MCF 10A (cell line): ENCODE measurements at regions of chr11 and their contacts with region 1.

Region 1: DNA sequence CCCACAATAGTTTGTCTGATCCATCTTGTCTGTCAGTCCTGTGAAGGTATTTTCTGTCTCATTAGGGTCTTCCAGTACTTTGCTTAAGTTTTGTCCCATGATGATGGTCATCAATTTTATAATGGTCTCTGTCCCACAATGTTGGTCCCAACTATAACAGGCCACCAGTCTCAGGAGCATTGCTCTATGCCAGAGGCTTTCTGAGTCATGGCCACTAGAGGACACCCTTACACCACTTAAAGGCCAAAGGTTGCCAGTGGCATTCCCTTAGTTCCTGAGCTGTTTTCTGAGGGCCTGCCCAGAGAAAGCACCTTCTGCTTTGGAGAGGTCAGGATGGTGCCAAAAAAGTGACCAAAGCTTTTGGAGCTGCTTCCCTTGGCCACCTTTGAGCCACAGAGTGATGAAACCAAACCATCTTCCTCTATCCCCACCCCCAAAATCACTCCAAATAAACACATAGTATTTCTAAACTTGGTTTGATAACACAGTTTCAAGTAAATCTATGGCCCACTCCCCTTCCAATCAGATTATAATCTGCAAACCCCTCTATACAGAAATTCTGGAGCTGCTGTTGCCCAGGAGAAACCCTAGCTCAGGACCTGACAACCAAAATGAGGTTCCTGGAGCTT is 19.3 kb downstream of the EIF3F start:
- DNase-seq: peak; percentile 72
- H3K4me3 Mint-ChIP-seq: no peak overlapping the region
- H3K27ac Mint-ChIP-seq: no peak overlapping the region
- H3K4me1 Mint-ChIP-seq: no peaks in the 10 kb centered on the region
- H3K27me3 Mint-ChIP-seq: peaks cover 11% of the 10 kb centered on the region
- CTCF ChIP-seq: peak; percentile 94

Region 2: DNA sequence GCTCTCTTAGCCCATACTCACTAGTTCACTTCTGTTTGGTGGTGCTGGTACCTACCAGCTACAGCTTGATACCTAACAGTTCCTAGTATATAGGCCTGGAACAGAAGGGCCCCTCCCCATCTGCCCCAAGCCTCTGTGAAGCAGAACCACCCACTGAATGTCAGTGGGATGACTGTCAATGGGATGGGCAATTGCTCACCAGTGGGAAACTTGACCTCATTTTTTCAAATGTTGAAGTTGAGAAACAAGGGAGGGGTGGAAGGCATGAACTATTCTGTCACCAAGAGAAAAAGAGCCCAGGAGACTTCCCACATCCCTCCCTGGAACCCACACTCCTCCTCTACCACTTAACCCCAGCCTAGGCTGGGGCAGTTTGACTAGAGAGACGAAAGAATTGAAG is 41.1 kb before region 1 on chr11 and contains the start of gene NLRP10:
- CTCF ChIA-PET with region 1: no interaction called
- POLR2A ChIA-PET with region 1: no interaction called
- intact Hi-C with region 1: no loop called
- DNase-seq: no peak
- H3K4me3 Mint-ChIP-seq: no peak within 1 kb of the TSS
- H3K27ac Mint-ChIP-seq: peak within 1 kb of the TSS; percentile 50
- H3K4me1 Mint-ChIP-seq: peaks cover 27% of the 10 kb centered on the region
- H3K27me3 Mint-ChIP-seq: no peaks in the 10 kb centered on the region
- CTCF ChIP-seq: no peak
- total RNA-seq, gene NLRP10: 0.42 and 1.3 TPM in 2 replicates

Region 3: GRCh38 chr11:7994581-7995278 is 11.7 kb before region 1 on chr11:
- CTCF ChIA-PET with region 1: interaction called, 16 read pairs
- POLR2A ChIA-PET with region 1: no interaction called
- intact Hi-C with region 1: no loop called
- DNase-seq: no peak
- H3K4me3 Mint-ChIP-seq: no peak overlapping the region
- H3K27ac Mint-ChIP-seq: no peak overlapping the region
- H3K4me1 Mint-ChIP-seq: peaks cover 6% of the 10 kb centered on the region
- H3K27me3 Mint-ChIP-seq: no peaks in the 10 kb centered on the region
- CTCF ChIP-seq: no peak

Region 4: GRCh38 chr11:8025816-8026215 is 19.4 kb after region 1 on chr11:
- CTCF ChIA-PET with region 1: interaction called, 114 read pairs
- POLR2A ChIA-PET with region 1: no interaction called
- intact Hi-C with region 1: no loop called
- DNase-seq: peak; percentile 25
- H3K4me3 Mint-ChIP-seq: no peak overlapping the region
- H3K27ac Mint-ChIP-seq: no peak overlapping the region
- H3K4me1 Mint-ChIP-seq: no peaks in the 10 kb centered on the region
- H3K27me3 Mint-ChIP-seq: peaks cover 21% of the 10 kb centered on the region
- CTCF ChIP-seq: no peak

Region 5: GRCh38 chr11:8070417-8071115 is 64.1 kb after region 1 on chr11:
- CTCF ChIA-PET with region 1: interaction called, 25 read pairs
- POLR2A ChIA-PET with region 1: no interaction called
- intact Hi-C with region 1: loop called (anchors 1 kb)
- DNase-seq: peak; percentile 38
- H3K4me3 Mint-ChIP-seq: no peak overlapping the region
- H3K27ac Mint-ChIP-seq: no peak overlapping the region
- H3K4me1 Mint-ChIP-seq: peaks cover 17% of the 10 kb centered on the region
- H3K27me3 Mint-ChIP-seq: peaks cover 15% of the 10 kb centered on the region
- CTCF ChIP-seq: peak; percentile 18

Region 6: GRCh38 chr11:8092587-8093424 is 86.3 kb after region 1 on chr11:
- CTCF ChIA-PET with region 1: interaction called, 675 read pairs
- POLR2A ChIA-PET with region 1: interaction called, 6 read pairs
- intact Hi-C with region 1: loop called (anchors 1 kb)
- DNase-seq: peak; percentile 76
- H3K4me3 Mint-ChIP-seq: no peak overlapping the region
- H3K27ac Mint-ChIP-seq: no peak overlapping the region
- H3K4me1 Mint-ChIP-seq: no peaks in the 10 kb centered on the region
- H3K27me3 Mint-ChIP-seq: no peaks in the 10 kb centered on the region
- CTCF ChIP-seq: peak; percentile 50

Region 7: DNA sequence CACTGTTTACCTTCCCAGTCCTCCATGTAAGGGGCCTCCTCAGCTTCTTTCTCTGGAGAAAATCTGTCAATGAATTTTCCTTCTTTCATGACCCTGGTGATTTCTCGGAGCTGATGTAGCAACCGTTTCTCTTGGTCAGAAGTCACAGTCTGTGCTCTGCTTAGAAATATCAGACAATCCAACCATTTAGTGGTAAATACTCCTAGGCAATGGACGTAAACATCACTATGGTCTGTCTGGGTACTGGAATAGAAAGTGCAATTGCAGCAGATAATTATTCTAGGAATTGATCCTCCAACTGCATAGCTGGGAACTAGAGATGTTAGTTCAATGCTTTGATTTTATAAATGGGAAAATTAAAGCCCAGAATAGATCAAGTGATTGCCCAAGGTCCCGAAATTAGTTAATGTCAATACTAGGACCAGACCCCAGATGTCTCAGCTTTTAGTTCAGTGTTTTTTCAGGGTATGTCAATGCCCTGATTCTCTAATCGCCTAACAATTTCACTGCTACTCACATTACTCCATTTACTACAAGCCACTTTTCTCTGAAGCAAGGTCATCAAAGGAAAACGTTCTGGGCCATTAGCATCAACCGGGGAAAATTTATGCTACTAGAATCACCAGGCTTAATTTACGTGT is 120.3 kb after region 1 on chr11:
- CTCF ChIA-PET with region 1: interaction called, 11 read pairs
- POLR2A ChIA-PET with region 1: no interaction called
- intact Hi-C with region 1: no loop called
- DNase-seq: no peak
- H3K4me3 Mint-ChIP-seq: no peak overlapping the region
- H3K27ac Mint-ChIP-seq: no peak overlapping the region
- H3K4me1 Mint-ChIP-seq: no peaks in the 10 kb centered on the region
- H3K27me3 Mint-ChIP-seq: no peaks in the 10 kb centered on the region
- CTCF ChIP-seq: no peak